Heart left ventricle (tissue), 16 donors: ENCODE measurements at regions of chr2 and their contacts with region 1.

Region 1: DNA sequence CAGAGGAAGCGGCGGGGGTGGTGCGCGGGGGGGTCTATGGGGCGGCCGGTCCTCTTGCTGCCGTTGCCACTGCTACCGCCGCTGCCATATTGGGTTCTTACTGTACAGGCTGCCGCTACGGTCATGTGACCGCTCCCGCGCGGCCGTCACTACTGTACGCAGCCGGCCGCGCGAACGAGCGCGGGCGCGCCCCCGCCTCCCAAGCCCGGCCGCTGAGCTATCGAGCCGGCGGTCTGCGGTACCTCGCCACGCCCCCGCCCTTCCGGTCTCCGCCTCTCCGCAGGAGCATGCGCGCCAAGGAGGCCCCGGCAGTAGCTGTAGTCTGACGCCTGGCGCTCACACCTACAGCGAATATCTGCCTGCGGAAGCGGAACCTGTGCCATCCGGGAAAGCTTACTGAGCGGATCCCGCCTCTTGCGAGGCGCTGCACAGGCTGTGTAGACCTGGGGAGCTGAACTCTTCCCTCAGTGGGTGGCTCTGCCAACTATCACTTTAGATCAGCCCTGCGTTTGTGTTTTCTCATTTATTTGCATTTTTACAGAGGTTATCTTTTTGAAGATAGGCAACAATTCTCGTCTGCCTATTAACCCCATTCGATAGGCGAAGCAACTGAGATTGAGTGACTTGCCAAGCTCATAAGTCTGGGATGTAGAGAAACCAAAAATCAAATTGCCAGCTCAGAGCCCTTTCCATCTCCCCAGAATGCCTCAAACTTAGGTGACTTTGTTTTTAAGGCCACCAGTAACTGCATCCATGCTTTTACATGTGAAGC is at the start of gene ASXL2:
- DNase-seq: peak; percentile 96 to 98 (median 98)
- ATAC-seq: peak; percentile 97 to 98 (median 98)
- H3K4me3 ChIP-seq: peak within 1 kb of the TSS; percentile 75 to 97 (median 93)
- H3K27ac ChIP-seq: peak within 1 kb of the TSS; percentile 87 to 98 (median 96)
- H3K4me1 ChIP-seq: peaks cover 0 to 26% (median 18%) of the 10 kb centered on the region in 12 donors
- H3K27me3 ChIP-seq: peaks cover 0 to 6% (median 0%) of the 10 kb centered on the region in 9 donors
- CTCF ChIP-seq: peak in 3 of 12 donors; percentile 10 to 25 (median 23)
- POLR2A ChIP-seq: peak in 1 of 2 donors; percentile 67
- total RNA-seq, gene ASXL2: 19.2 to 35.3 (median 30.3) TPM

Region 2: DNA sequence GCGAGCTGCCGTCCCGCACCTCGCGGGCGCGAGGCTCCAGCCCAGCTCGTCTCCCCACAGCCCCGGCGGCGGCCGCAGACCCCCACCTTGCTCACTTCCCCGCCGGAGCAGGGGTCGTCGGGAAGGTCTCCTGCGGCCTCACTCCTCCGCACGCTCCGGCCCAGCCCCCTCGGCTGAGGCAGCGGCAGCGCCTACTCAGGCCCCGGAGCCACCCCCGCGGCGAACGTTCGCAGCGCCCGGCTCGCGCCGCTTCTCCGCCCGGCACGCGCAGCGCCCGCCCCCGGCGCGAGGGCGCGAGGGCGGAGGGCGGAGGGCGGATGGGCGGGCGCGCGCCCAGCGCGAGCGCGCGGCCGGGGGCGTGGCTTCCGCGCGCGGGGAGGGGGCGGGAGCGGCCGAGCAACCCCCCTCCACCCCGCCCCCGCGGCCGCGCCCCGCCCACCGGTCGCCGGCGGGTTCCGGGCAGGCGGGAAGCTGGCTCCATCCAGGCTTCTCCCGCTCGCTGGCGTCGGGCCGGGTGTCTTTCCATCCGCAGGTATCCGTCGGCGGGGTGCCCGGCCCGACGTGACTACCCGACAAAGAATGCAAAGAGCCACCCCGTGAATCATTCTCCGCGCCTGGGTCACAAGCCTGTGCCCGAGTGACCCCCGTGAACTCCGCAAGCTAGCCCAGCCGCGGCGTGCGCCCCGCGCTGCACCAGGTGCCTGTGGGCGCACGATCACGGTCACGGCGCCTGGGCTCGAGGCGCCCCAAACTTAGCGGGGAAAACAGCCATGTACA is 205.1 kb before region 1 on chr2 and contains the start of gene DTNB:
- intact Hi-C with region 1: loop called in 2 of 10 experiments (anchors 10 kb)
- DNase-seq: peak; percentile 81 to 91 (median 86)
- ATAC-seq: peak; percentile 37 to 92 (median 88)
- H3K4me3 ChIP-seq: peak within 1 kb of the TSS; percentile 65 to 99 (median 90)
- H3K27ac ChIP-seq: peak within 1 kb of the TSS; percentile 54 to 92 (median 83)
- H3K4me1 ChIP-seq: peaks cover 0 to 21% (median 11%) of the 10 kb centered on the region in 12 donors
- H3K27me3 ChIP-seq: no peaks in the 10 kb centered on the region
- CTCF ChIP-seq: no peak
- POLR2A ChIP-seq: peak in 1 of 2 donors; percentile 42
- total RNA-seq, gene DTNB: 2.5 to 17.3 (median 6.3) TPM

Region 3: GRCh38 chr2:25784408-25784807 is 94.1 kb before region 1 on chr2:
- intact Hi-C with region 1: no loop called
- DNase-seq: no peak
- ATAC-seq: no peak
- H3K4me3 ChIP-seq: no peak overlapping the region
- H3K27ac ChIP-seq: no peak overlapping the region
- H3K4me1 ChIP-seq: no peaks in the 10 kb centered on the region
- H3K27me3 ChIP-seq: no peaks in the 10 kb centered on the region
- CTCF ChIP-seq: no peak
- POLR2A ChIP-seq: no peak

Region 4: DNA sequence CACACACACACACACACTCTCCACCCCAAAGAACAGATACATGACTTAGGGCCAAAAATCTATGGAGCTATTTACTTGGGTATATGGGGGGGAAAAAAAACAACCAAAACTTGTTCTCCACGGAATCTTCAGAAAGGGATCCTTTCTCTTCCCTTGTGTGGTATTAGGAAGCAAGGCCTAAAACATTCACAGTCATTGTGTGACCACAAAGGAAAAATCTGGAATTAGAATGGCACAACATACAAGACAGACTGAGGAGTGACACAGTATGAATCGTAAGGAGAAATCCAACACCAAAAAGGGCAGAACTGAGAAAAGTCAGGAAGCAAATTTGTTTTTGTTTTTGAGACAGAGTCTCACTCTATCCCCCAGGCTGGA is 70.6 kb before region 1 on chr2:
- intact Hi-C with region 1: no loop called
- DNase-seq: no peak
- ATAC-seq: no peak
- H3K4me3 ChIP-seq: no peak overlapping the region
- H3K27ac ChIP-seq: no peak overlapping the region
- H3K4me1 ChIP-seq: peaks cover 0 to 11% (median 0%) of the 10 kb centered on the region in 12 donors
- H3K27me3 ChIP-seq: no peaks in the 10 kb centered on the region
- CTCF ChIP-seq: no peak
- POLR2A ChIP-seq: no peak

Region 5: GRCh38 chr2:25936889-25937545 is 58.5 kb after region 1 on chr2:
- intact Hi-C with region 1: loop called in 4 of 10 experiments (anchors 5 kb)
- DNase-seq: no peak
- ATAC-seq: peak in 1 of 4 donors; percentile 33
- H3K4me3 ChIP-seq: no peak overlapping the region
- H3K27ac ChIP-seq: peak overlapping the region in 11 of 12 donors; percentile 21 to 85 (median 75)
- H3K4me1 ChIP-seq: peaks cover 0 to 20% (median 2%) of the 10 kb centered on the region in 12 donors
- H3K27me3 ChIP-seq: no peaks in the 10 kb centered on the region
- CTCF ChIP-seq: no peak
- POLR2A ChIP-seq: no peak